ENCODE measurements at regions of chrX and their contacts with region 1.

Region 1: DNA sequence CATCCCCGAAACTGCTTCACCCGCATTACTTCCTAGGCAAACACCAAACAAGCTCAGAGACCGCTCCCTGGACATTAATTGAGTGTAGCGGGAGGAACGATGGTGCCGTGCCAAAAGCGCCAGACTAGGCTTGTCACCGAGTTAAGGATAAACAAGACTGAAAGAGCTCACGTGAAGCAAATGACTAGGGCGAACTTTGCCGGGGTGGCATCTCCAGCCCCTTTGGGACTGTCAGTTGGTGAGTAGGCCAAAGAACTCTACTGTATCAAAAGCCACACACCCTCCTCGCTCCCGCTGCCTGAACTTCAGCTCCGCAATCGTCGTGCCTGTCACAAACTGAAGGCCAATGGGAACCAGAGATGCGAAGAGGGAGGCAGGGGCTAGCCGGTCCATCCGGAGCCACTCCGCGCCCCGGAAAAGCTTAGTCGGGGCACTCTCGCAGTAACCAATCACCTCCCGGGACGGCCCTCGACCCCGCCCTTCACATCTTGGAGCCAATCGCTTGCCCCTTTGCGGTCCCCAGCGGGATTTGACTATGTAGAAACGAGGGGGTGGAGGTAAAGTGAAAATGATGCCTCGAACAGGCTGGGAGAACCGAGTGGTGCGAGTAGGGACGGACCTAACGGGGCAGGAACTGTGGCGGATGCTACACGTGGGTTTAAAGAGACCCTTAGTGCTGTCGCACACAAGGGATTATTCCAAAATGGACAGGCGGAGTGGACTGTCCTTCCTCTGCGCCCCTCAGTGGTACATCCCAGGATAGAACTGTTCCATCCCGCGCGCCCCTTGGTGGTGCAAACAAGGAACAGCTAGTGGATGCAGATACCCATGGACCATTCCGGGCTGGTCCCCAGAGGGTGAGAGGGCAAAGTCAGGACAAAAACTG is 37.1 kb upstream of the FAM156A start:
- DNase-seq: peak; percentile 89
- ATAC-seq: peak; percentile 99
- H3K4me3 ChIP-seq: peak overlapping the region; percentile 86 to 98
- H3K27ac ChIP-seq: peak overlapping the region; percentile 97
- H3K4me1 ChIP-seq: peaks cover 3% of the 10 kb centered on the region; the same call in 1 of the 2 replicates
- H3K27me3 ChIP-seq: no peaks in the 10 kb centered on the region
- CTCF ChIP-seq: peak; percentile 80

Region 2: GRCh38 chrX:53081925-53082772 is 86.8 kb after region 1 on chrX and contains the start of gene TSPYL2:
- CTCF ChIA-PET with region 1: interaction called, 10 read pairs
- POLR2A ChIA-PET with region 1: no interaction called
- in situ Hi-C with region 1: no loop called
- intact Hi-C with region 1: no loop called
- DNase-seq: peak; percentile 81
- ATAC-seq: peak; percentile 95
- H3K4me3 ChIP-seq: peak within 1 kb of the TSS; percentile 76 to 78
- H3K27ac ChIP-seq: peak within 1 kb of the TSS; percentile 69
- H3K4me1 ChIP-seq: peaks cover 3% of the 10 kb centered on the region
- H3K27me3 ChIP-seq: no peaks in the 10 kb centered on the region
- CTCF ChIP-seq: no peak
- total RNA-seq, gene TSPYL2: 25.0 TPM